ENCODE measurements at regions of chr11 and their contacts with region 1.

Region 1: GRCh38 chr11:63871962-63872799 is 33.3 kb downstream of the MARK2 start:
- DNase-seq: peak in 3 of 9 donors; percentile 11 to 44 (median 23)
- ATAC-seq: peak; percentile 96
- H3K4me3 ChIP-seq: no peak overlapping the region
- H3K4me3 Mint-ChIP-seq: peak overlapping the region; percentile 45 to 72 (median 62)
- H3K27ac ChIP-seq: no peak overlapping the region
- H3K27ac Mint-ChIP-seq: peak overlapping the region in 7 of 9 donors; percentile 8 to 70 (median 41)
- H3K4me1 ChIP-seq: peaks cover 56 to 62% of the 10 kb centered on the region in 2 donors
- H3K4me1 Mint-ChIP-seq: peaks cover 58 to 88% (median 83%) of the 10 kb centered on the region in 7 donors
- H3K27me3 ChIP-seq: no peaks in the 10 kb centered on the region
- H3K27me3 Mint-ChIP-seq: no peaks in the 10 kb centered on the region

Region 2: GRCh38 chr11:62612366-62613290 is 1259.6 kb before region 1 on chr11 and contains the starts of genes EML3 and ROM1:
- CTCF ChIA-PET with region 1: no interaction called
- POLR2A ChIA-PET with region 1: no interaction called
- intact Hi-C with region 1: no loop called
- DNase-seq: peak; percentile 74 to 96 (median 83)
- ATAC-seq: peak; percentile 90
- H3K4me3 ChIP-seq: peak within 1 kb of the TSS; percentile 99
- H3K4me3 Mint-ChIP-seq: peak within 1 kb of the TSS; percentile 89 to 100 (median 96)
- H3K27ac ChIP-seq: peak within 1 kb of the TSS; percentile 92
- H3K27ac Mint-ChIP-seq: peak within 1 kb of the TSS; percentile 93 to 100 (median 97)
- H3K4me1 ChIP-seq: peaks cover 19 to 32% of the 10 kb centered on the region in 2 donors
- H3K4me1 Mint-ChIP-seq: peaks cover 31 to 56% (median 48%) of the 10 kb centered on the region in 7 donors
- H3K27me3 ChIP-seq: no peaks in the 10 kb centered on the region
- H3K27me3 Mint-ChIP-seq: no peaks in the 10 kb centered on the region
- total RNA-seq, gene EML3: 152 to 209 (median 188) TPM
- total RNA-seq, gene ROM1: 1.2 to 2.4 (median 2.0) TPM

Region 3: GRCh38 chr11:63906585-63906984 is 34.4 kb after region 1 on chr11:
- CTCF ChIA-PET with region 1: interaction called, 5 read pairs
- POLR2A ChIA-PET with region 1: no interaction called
- intact Hi-C with region 1: loop called in 1 of 2 experiments (anchors 2 kb)
- DNase-seq: peak in 7 of 9 donors; percentile 38 to 65 (median 60)
- ATAC-seq: peak; percentile 70
- H3K4me3 ChIP-seq: no peak overlapping the region
- H3K4me3 Mint-ChIP-seq: no peak overlapping the region
- H3K27ac ChIP-seq: no peak overlapping the region
- H3K27ac Mint-ChIP-seq: peak overlapping the region in 4 of 9 donors; percentile 17 to 80 (median 61)
- H3K4me1 ChIP-seq: no peaks in the 10 kb centered on the region
- H3K4me1 Mint-ChIP-seq: peaks cover 0 to 6% (median 3%) of the 10 kb centered on the region in 7 donors
- H3K27me3 ChIP-seq: no peaks in the 10 kb centered on the region
- H3K27me3 Mint-ChIP-seq: no peaks in the 10 kb centered on the region

Region 4: DNA sequence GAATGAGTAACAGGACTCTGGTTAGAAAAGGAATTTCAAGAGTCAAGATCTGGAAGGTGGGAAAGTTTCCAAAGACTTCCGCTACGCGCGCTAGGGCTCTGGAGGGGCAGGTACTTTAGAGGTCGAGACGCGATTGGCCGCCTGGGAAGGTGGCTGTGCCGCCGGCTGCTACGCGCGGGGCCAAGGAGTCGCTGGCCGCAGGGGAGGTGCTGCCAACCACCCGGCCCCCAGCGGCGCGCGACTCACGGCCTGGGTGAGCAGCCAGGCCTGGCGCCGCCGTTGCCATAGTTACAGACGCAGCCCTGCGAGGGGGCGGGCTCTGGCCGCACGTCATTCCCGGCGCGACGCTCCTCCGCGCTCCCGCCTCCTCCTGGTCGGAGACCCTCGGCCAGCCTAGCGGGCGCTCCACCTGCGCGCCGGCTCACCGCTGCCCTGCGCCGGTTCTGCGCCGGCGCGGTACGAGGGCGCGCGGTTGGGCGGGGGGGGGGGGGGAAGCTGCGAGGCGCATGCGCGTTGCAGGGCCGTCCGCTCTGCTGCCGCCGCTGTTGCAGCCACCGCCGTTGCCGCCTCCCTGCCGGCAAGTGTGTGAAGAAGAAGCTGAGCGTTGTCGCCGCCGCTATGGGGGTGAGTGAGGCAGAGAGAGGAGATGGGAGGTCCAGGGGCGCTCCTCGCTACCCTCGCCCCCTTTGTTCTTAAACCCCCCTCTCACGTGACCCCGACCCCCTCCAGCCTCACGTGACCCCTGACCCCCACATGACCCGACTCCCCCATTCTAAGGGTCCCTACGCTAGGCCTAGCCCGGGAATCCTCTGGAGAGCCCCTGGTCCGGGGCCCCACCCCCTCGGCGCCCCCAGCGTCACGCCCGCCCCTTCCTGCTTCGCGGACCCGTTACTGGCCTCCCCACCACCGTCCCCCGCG is 66.6 kb after region 1 on chr11 and contains the start of gene NAA40:
- CTCF ChIA-PET with region 1: no interaction called
- POLR2A ChIA-PET with region 1: no interaction called
- intact Hi-C with region 1: no loop called
- DNase-seq: peak; percentile 78 to 91 (median 84)
- ATAC-seq: peak; percentile 92
- H3K4me3 ChIP-seq: peak within 1 kb of the TSS; percentile 84
- H3K4me3 Mint-ChIP-seq: peak within 1 kb of the TSS; percentile 80 to 99 (median 94)
- H3K27ac ChIP-seq: peak within 1 kb of the TSS; percentile 73
- H3K27ac Mint-ChIP-seq: peak within 1 kb of the TSS; percentile 81 to 95 (median 89)
- H3K4me1 ChIP-seq: peaks cover 11 to 18% of the 10 kb centered on the region in 2 donors
- H3K4me1 Mint-ChIP-seq: peaks cover 22 to 28% (median 27%) of the 10 kb centered on the region in 7 donors
- H3K27me3 ChIP-seq: no peaks in the 10 kb centered on the region
- H3K27me3 Mint-ChIP-seq: peaks cover 0 to 2% (median 0%) of the 10 kb centered on the region in 5 donors
- total RNA-seq, gene NAA40: 21.0 to 39.8 (median 24.8) TPM